Ovary (tissue), 10 donors: ENCODE measurements at regions of chr2 and their contacts with region 1.

Region 1: GRCh38 chr2:117859924-117860647 is 45.6 kb downstream of the DDX18 start:
- DNase-seq: no peak
- H3K4me3 ChIP-seq: no peak overlapping the region
- H3K27ac ChIP-seq: no peak overlapping the region
- H3K4me1 ChIP-seq: no peaks in the 10 kb centered on the region
- H3K27me3 ChIP-seq: no peaks in the 10 kb centered on the region
- CTCF ChIP-seq: no peak
- EP300 ChIP-seq: no peak
- POLR2A ChIP-seq: no peak

Region 2: GRCh38 chr2:116911540-116911939 is 948.5 kb before region 1 on chr2:
- intact Hi-C with region 1: loop called in 1 of 4 experiments (anchors 10 kb)
- DNase-seq: no peak
- H3K4me3 ChIP-seq: no peak overlapping the region
- H3K27ac ChIP-seq: no peak overlapping the region
- H3K4me1 ChIP-seq: no peaks in the 10 kb centered on the region
- H3K27me3 ChIP-seq: no peaks in the 10 kb centered on the region
- CTCF ChIP-seq: no peak
- EP300 ChIP-seq: no peak
- POLR2A ChIP-seq: no peak